ENCODE measurements at regions of chr17 and their contacts with region 1.

Region 1: GRCh38 chr17:66255112-66255511 is 25.9 kb upstream of the APOH start:
- DNase-seq: no peak
- ATAC-seq: peak; percentile 96
- H3K4me3 ChIP-seq: no peak overlapping the region
- H3K27ac ChIP-seq: no peak overlapping the region
- H3K4me1 ChIP-seq: no peaks in the 10 kb centered on the region
- H3K27me3 ChIP-seq: no peaks in the 10 kb centered on the region
- CTCF ChIP-seq: peak; percentile 39 to 81 (median 42); a peak in 4 of 6 replicates
- EP300 ChIP-seq: no peak
- POLR2A ChIP-seq: no peak
- RAD21 ChIP-seq: peak; percentile 83

Region 2: DNA sequence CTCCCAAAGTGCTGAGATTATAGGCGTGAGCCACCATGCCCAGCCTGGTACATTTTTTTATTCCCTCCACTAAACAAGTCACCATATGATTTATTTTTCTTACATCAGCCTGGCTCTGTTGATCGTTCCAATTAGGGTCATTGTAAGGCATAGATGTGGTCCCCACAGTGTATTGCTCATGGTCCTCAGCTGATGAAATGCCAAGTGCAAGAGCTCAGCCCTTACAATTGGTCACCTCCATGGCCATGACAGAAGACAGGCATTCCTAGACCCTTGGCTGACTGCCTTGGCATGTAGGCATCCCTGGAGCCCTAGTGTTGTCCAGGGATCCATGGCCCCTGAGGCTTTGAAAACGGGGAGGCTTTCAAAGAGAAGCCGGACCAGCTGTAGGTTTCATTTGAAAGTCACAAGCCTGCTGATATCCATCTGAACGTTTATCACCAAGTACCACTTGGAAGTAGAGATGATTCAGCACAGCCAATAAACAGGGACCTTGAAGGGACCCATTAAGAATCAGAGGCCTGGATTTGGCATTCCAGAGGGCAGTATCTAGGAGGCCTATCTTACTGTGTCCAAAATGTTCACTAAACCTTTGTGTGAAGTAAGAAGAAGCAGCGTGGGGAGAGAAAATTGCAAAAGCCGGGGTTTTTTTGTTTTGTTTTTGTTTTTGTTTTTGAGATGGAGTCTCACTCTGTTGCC is 26.7 kb after region 1 on chr17:
- CTCF ChIA-PET with region 1: no interaction called
- POLR2A ChIA-PET with region 1: no interaction called
- RAD21 ChIA-PET with region 1: no interaction called
- SMC1A ChIA-PET with region 1: no interaction called
- in situ Hi-C with region 1: no loop called
- intact Hi-C with region 1: no loop called
- DNase-seq: no peak
- ATAC-seq: no peak
- H3K4me3 ChIP-seq: no peak overlapping the region
- H3K27ac ChIP-seq: no peak overlapping the region
- H3K4me1 ChIP-seq: no peaks in the 10 kb centered on the region
- H3K27me3 ChIP-seq: no peaks in the 10 kb centered on the region
- CTCF ChIP-seq: no peak
- EP300 ChIP-seq: no peak
- POLR2A ChIP-seq: no peak
- RAD21 ChIP-seq: no peak

Region 3: DNA sequence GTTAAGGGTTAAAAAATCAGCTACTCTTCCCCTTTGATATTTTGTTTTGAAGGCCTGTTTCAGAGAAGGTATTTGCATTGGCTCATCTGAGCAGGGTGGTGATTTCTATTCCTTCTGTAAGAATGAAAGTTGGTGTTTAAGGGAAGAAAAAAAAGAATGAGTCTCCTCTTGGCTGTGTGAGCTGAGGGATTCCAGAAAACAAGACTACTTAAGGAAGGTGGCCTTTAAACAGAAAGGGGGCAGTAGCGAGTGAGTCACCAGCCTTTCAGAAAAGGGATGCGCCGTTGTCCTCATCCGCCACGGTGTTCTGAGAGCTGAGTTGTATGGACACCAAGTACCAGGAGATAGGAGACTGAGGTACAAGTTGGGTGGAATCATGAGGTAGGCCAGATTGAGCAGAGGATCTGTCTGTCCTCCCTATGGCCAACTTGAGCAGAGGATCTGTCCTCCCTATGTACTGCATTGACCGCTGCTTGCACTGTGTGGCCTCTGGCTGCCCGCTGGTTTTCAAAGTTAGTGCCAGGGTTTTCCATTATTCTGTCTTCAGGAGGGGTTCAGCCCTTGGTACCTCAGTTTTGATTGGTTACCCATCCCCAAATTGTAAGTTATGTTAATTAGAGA is 55.5 kb after region 1 on chr17:
- CTCF ChIA-PET with region 1: no interaction called
- POLR2A ChIA-PET with region 1: no interaction called
- RAD21 ChIA-PET with region 1: no interaction called
- SMC1A ChIA-PET with region 1: no interaction called
- in situ Hi-C with region 1: no loop called
- intact Hi-C with region 1: no loop called
- DNase-seq: no peak
- ATAC-seq: no peak
- H3K4me3 ChIP-seq: no peak overlapping the region
- H3K27ac ChIP-seq: no peak overlapping the region
- H3K4me1 ChIP-seq: no peaks in the 10 kb centered on the region
- H3K27me3 ChIP-seq: no peaks in the 10 kb centered on the region; a peak in 1 of 4 replicates
- CTCF ChIP-seq: no peak
- EP300 ChIP-seq: no peak
- POLR2A ChIP-seq: no peak
- RAD21 ChIP-seq: no peak

Region 4: GRCh38 chr17:66426397-66427033 is 171.4 kb after region 1 on chr17:
- CTCF ChIA-PET with region 1: interaction called, 3 read pairs
- POLR2A ChIA-PET with region 1: no interaction called
- RAD21 ChIA-PET with region 1: interaction called, 3 read pairs
- SMC1A ChIA-PET with region 1: interaction called, 6 read pairs
- in situ Hi-C with region 1: no loop called
- intact Hi-C with region 1: loop called (anchors 2 kb)
- DNase-seq: no peak
- ATAC-seq: peak; percentile 93
- H3K4me3 ChIP-seq: no peak overlapping the region
- H3K27ac ChIP-seq: no peak overlapping the region
- H3K4me1 ChIP-seq: no peaks in the 10 kb centered on the region
- H3K27me3 ChIP-seq: no peaks in the 10 kb centered on the region
- CTCF ChIP-seq: peak; percentile 27 to 33 (median 33); a peak in 4 of 6 replicates
- EP300 ChIP-seq: no peak
- POLR2A ChIP-seq: no peak
- RAD21 ChIP-seq: 0 out of 2 replicates have a peak, but pooled peaks have one; percentile 14

Region 5: GRCh38 chr17:66625311-66625775 is 370.2 kb after region 1 on chr17:
- CTCF ChIA-PET with region 1: interaction called, 5 read pairs
- POLR2A ChIA-PET with region 1: no interaction called
- RAD21 ChIA-PET with region 1: interaction called, 5 read pairs
- SMC1A ChIA-PET with region 1: interaction called, 5 read pairs
- in situ Hi-C with region 1: no loop called
- intact Hi-C with region 1: loop called (anchors 1 kb)
- DNase-seq: no peak
- ATAC-seq: peak; percentile 77
- H3K4me3 ChIP-seq: no peak overlapping the region
- H3K27ac ChIP-seq: no peak overlapping the region
- H3K4me1 ChIP-seq: no peaks in the 10 kb centered on the region
- H3K27me3 ChIP-seq: no peaks in the 10 kb centered on the region
- CTCF ChIP-seq: peak in 2 of 3 experiments; percentile 9 to 14; a peak in 2 of 6 replicates
- EP300 ChIP-seq: no peak
- POLR2A ChIP-seq: no peak
- RAD21 ChIP-seq: peak; percentile 41; the same call in 1 of the 2 replicates

Region 6: GRCh38 chr17:66673668-66674315 is 418.7 kb after region 1 on chr17:
- CTCF ChIA-PET with region 1: interaction called, 13 read pairs
- POLR2A ChIA-PET with region 1: no interaction called
- RAD21 ChIA-PET with region 1: interaction called, 6 read pairs
- SMC1A ChIA-PET with region 1: interaction called, 17 read pairs
- in situ Hi-C with region 1: loop called (anchors 5 kb)
- intact Hi-C with region 1: loop called (anchors 1 kb)
- DNase-seq: no peak
- ATAC-seq: peak; percentile 72
- H3K4me3 ChIP-seq: no peak overlapping the region
- H3K27ac ChIP-seq: no peak overlapping the region
- H3K4me1 ChIP-seq: no peaks in the 10 kb centered on the region
- H3K27me3 ChIP-seq: no peaks in the 10 kb centered on the region
- CTCF ChIP-seq: peak; percentile 49 to 63 (median 55); a peak in 5 of 6 replicates
- EP300 ChIP-seq: no peak
- POLR2A ChIP-seq: no peak
- RAD21 ChIP-seq: peak; percentile 74

Region 7: GRCh38 chr17:66906321-66907278 is 651.5 kb after region 1 on chr17:
- CTCF ChIA-PET with region 1: interaction called, 4 read pairs
- POLR2A ChIA-PET with region 1: no interaction called
- RAD21 ChIA-PET with region 1: no interaction called
- SMC1A ChIA-PET with region 1: no interaction called
- in situ Hi-C with region 1: loop called (anchors 10 kb)
- intact Hi-C with region 1: loop called (anchors 5 kb)
- DNase-seq: peak; percentile 25
- ATAC-seq: peak; percentile 83
- H3K4me3 ChIP-seq: no peak overlapping the region
- H3K27ac ChIP-seq: no peak overlapping the region
- H3K4me1 ChIP-seq: no peaks in the 10 kb centered on the region
- H3K27me3 ChIP-seq: no peaks in the 10 kb centered on the region; a peak in 1 of 4 replicates
- CTCF ChIP-seq: peak; percentile 83 to 92 (median 87)
- EP300 ChIP-seq: no peak
- POLR2A ChIP-seq: no peak
- RAD21 ChIP-seq: peak; percentile 77